Dorsolateral prefrontal cortex (tissue), 120 donors: ENCODE measurements at regions of chr10 and their contacts with region 1.

Region 1: GRCh38 chr10:80444646-80445319 is 9.3 kb upstream of the TSPAN14 start:
- DNase-seq: peak; percentile 39 to 80 (median 68)
- H3K4me3 ChIP-seq: no peak overlapping the region
- H3K27ac ChIP-seq: peak overlapping the region in 46 of 59 donors; percentile 2 to 78 (median 58)
- H3K27me3 ChIP-seq: no peaks in the 10 kb centered on the region
- CTCF ChIP-seq: peak; percentile 32 to 96 (median 85)

Region 2: DNA sequence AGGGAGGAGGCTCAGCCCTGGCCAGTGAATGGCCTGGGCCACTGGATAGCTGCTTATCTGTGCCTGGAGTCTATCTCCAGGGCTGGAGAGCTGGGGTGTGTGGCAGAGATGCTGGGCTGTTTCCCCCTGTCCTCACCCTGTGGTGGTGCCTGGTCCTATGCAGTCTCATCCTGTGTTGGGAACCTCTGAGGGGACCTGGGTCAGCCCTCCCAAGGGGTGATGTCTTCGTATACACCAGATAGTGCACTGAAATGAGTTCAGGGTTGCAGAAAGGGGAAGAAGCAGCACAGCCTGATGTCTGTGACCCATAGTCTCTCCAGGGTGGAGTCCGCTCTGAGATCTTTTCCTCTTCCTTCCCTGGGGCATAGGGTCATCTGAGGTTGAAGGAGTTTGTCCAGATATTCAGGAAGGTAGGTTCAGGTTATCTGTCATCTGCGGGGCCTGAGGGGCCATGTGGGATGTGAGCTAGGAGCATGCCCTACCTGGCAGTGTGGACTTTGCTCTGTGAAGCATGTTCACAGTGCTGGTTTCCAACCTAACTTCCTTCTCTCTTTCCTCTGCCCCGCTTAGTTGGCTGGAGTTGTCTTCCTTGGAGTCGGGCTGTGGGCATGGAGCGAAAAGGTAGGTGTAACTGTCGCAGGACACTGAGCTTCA is 59.5 kb after region 1 on chr10:
- intact Hi-C with region 1: loop called (anchors 1 to 2 kb)
- DNase-seq: peak in 1 of 10 donors; percentile 30
- H3K4me3 ChIP-seq: no peak overlapping the region
- H3K27ac ChIP-seq: peak overlapping the region in 51 of 59 donors; percentile 5 to 89 (median 73)
- H3K27me3 ChIP-seq: no peaks in the 10 kb centered on the region
- CTCF ChIP-seq: no peak